ENCODE measurements at regions of chr9 and their contacts with region 1.

Region 1: DNA sequence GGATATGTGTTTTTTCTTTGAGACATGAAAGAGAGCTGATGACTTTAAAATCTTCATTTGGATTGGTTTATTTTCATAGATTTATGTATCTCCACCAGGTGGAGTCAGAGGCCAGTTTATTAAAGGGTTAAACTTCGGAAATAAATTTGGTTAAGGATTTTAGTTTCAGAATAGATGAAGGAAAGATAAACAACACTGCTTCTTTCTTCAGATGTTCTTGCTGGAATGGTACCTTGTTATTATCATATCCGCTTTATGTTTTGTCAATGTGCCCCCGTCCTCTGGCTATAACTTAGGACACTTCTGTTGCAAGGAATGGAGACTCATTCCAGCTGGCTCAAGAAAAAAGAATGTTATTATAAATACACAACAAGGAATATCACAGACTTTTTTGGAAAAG is 81.2 kb downstream of the ALDH1A1 start:
- DNase-seq: no peak
- ATAC-seq: peak in 3 of 4 donors; percentile 62 to 65 (median 63)
- H3K4me3 ChIP-seq: no peak overlapping the region
- H3K27ac ChIP-seq: no peak overlapping the region
- H3K4me1 ChIP-seq: no peaks in the 10 kb centered on the region
- H3K27me3 ChIP-seq: no peaks in the 10 kb centered on the region
- CTCF ChIP-seq: peak in 2 of 4 donors; percentile 13 to 39

Region 2: DNA sequence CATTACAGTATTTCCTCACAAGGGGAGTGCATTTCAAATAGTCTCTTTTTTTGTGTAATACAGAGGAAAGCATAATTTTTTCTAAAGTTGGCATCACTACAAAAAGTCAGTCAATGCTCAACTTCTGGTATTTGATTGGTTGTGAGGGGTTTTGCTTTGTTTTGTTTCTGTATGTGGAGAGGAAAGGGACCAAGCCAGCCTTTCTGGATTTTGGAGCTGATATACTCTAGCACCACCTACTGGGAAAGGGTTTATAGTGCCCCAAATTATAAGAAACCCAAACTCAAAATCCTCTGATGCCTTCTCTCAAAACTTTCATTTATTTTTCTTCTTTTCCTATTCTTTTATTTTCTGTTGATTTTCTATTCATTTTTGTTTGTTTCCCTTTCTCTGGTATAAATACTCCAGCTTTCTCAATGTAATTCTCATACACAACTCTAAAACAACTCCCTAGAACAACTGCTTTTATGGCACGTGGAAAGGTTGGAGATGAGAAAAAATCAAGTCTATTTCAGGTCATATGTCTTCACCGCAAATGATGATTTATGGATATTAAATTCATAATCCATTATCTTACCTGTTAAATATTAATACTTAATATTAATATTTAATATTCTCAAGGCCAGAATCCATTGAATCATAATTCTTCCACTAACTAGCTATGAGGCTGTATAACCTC is 210.4 kb after region 1 on chr9:
- intact Hi-C with region 1: loop called in 2 of 3 experiments (anchors 10 kb)
- DNase-seq: peak in 1 of 6 donors; percentile 15
- ATAC-seq: peak; percentile 48 to 88 (median 84)
- H3K4me3 ChIP-seq: no peak overlapping the region
- H3K27ac ChIP-seq: no peak overlapping the region
- H3K4me1 ChIP-seq: no peaks in the 10 kb centered on the region
- H3K27me3 ChIP-seq: no peaks in the 10 kb centered on the region
- CTCF ChIP-seq: peak; percentile 22 to 67 (median 52)

Region 3: GRCh38 chr9:73459817-73460216 is 588.1 kb after region 1 on chr9:
- intact Hi-C with region 1: no loop called
- DNase-seq: no peak
- ATAC-seq: no peak
- H3K4me3 ChIP-seq: no peak overlapping the region
- H3K27ac ChIP-seq: no peak overlapping the region
- H3K4me1 ChIP-seq: no peaks in the 10 kb centered on the region
- H3K27me3 ChIP-seq: no peaks in the 10 kb centered on the region
- CTCF ChIP-seq: no peak

Measured in pancreas (tissue), 10 donors.